ENCODE measurements at regions of chr19 and their contacts with region 1.

Region 1: GRCh38 chr19:11894851-11895250 is 7.3 kb downstream of the ZNF69 start:
- DNase-seq: no peak
- H3K4me3 ChIP-seq: no peak overlapping the region
- H3K27ac ChIP-seq: no peak overlapping the region
- H3K4me1 ChIP-seq: no peaks in the 10 kb centered on the region
- H3K27me3 ChIP-seq: no peaks in the 10 kb centered on the region
- CTCF ChIP-seq: no peak
- EP300 ChIP-seq: no peak
- POLR2A ChIP-seq: no peak

Region 2: DNA sequence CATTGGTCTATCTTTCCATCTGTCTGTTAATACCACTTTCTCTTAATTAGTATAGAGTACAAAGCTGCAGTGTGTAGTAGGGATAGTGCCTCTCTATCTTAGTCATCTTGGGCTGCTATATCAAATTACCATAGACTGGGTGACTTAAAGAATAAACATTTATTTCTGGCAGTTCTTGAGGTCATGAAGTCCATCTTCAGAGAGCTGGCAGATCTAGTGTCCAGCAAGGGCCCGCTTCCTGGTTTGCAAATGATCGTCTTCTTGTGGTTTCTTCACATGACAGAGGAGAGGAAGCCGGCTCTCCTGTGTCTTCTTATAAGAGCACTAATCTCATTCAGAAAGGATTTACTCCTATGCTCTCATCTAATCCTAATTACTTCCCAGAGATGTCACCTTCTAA is 36.2 kb after region 1 on chr19:
- intact Hi-C with region 1: loop called in 1 of 4 experiments (anchors 2 kb)
- DNase-seq: no peak
- H3K4me3 ChIP-seq: no peak overlapping the region
- H3K27ac ChIP-seq: no peak overlapping the region
- H3K4me1 ChIP-seq: peaks cover 3% of the 10 kb centered on the region
- H3K27me3 ChIP-seq: no peaks in the 10 kb centered on the region
- CTCF ChIP-seq: no peak
- EP300 ChIP-seq: no peak
- POLR2A ChIP-seq: no peak